Head of caudate nucleus (tissue), 42 donors: ENCODE measurements at regions of chr17 and their contacts with region 1.

Region 1: DNA sequence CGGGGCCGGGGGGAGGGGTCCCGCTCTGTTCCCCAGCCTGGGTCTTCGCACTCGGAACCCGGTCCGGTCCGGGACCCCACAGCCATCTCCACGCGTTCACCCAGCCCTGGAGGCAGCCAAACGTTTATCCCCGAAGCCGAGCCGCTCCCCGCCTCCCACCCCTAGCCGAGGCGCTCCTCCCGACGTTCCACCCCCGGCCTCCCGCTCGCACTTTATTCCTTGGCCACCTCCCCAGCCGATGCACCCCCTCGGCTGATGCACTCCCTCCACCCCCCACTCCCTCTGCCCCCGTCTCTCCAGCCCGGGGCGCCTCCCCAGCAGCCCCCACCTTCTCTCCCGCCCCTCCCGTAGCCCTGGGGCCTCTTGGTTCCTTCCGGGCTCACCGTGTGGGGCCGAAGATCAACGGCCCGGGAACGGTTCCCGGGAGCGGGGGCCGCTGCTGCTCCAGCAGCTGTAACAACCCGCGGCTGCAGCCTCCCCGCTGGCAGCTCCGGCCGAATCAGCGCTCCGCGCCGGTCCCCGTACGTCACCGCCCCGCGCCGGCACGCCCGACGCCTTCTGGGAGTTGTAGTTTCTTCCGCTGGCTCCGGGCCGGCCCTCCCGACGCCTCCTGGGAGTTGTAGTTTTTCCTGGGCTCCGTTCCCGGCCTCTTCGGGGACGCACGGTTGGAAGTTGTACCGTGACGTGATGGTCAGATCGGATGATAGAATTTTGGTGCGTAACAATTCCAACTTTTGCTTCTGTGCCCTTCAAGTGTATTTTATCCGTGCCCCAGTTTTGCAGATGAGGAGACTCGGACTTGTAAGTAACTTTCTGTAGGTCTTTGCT is at the starts of genes LRRC3C and ORMDL3:
- DNase-seq: peak; percentile 82 to 97 (median 94)

Region 2: DNA sequence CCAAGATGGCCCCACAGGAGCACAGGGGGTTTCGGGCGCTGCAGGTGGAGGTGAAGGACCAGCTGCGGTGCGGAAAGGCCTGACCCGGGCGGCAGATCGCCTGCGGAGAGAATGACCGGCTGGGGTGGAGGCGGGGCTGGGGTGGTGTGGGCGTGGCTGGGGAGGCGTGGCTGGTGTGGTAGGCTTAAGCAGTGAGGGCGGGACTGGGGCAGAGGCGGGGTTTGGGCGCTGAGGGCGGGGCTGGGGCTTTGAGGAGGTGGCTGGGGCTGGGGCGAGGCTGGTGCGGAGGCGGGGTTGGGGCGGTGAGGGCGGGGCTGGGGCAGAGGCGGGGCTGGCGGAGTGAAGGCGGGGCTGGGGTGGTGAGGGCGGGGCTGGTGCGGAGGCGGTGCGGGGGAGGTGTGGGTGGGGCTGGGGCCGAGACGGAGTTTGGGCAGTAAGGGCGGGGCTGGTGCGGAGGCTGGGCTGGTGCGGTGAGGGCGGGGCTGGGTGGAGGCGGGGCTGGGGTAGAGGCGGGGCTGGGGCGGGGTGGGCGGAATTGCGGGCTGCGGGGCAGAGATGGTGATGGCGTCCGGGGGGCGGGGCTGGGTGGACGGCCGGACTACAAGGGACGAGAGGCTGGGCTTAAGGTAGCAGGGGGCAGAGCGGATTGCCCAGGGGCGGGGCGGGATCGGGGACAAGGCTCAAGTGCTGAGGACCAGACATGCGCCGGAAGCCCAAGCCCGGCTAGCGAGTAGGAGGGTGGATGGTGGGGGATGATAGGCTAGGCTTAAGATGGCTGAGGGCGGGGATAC is 25.6 kb after region 1 on chr17:
- intact Hi-C with region 1: loop called (anchors 2 kb)
- DNase-seq: peak; percentile 87 to 98 (median 95)

Region 3: DNA sequence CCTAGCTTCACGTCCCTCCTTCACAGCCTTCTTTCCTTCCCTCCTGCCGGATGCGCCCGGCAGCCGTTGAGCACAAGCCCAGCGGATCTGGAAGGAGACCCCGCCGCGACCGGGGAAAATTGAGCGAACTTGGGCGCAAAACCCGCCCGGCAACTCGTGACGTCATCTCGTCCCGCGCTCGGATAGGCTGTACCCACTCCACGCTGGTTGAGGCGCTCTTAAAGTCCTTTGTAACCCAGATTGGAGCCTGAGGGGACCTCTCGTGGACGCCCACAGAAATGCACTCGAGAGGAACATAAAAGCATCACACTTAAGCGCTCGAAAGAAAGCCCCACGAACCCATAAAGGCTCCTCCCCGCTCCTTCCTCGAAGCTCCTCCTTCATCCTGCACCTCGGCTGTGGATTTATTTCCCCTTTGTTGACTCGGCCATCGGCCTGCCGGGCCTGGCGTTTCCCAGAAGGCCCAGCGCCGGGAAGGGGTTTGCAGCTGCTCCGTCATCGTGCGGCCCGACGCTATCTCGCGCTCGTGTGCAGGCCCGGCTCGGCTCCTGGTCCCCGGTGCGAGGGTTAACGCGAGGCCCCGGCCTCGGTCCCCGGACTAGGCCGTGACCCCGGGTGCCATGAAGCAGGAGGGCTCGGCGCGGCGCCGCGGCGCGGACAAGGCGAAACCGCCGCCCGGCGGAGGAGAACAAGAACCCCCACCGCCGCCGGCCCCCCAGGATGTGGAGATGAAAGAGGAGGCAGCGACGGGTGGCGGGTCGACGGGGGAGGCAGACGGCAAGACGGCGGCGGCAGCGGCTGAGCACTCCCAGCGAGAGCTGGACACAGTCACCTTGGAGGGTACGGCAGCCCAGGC is 53.3 kb after region 1 on chr17 and contains the start of gene PSMD3:
- intact Hi-C with region 1: loop called (anchors 1 kb)
- DNase-seq: peak; percentile 96 to 100 (median 99)